Thyroid gland (tissue), 4 donors: ENCODE measurements at regions of chr15 and their contacts with region 1.

Region 1: DNA sequence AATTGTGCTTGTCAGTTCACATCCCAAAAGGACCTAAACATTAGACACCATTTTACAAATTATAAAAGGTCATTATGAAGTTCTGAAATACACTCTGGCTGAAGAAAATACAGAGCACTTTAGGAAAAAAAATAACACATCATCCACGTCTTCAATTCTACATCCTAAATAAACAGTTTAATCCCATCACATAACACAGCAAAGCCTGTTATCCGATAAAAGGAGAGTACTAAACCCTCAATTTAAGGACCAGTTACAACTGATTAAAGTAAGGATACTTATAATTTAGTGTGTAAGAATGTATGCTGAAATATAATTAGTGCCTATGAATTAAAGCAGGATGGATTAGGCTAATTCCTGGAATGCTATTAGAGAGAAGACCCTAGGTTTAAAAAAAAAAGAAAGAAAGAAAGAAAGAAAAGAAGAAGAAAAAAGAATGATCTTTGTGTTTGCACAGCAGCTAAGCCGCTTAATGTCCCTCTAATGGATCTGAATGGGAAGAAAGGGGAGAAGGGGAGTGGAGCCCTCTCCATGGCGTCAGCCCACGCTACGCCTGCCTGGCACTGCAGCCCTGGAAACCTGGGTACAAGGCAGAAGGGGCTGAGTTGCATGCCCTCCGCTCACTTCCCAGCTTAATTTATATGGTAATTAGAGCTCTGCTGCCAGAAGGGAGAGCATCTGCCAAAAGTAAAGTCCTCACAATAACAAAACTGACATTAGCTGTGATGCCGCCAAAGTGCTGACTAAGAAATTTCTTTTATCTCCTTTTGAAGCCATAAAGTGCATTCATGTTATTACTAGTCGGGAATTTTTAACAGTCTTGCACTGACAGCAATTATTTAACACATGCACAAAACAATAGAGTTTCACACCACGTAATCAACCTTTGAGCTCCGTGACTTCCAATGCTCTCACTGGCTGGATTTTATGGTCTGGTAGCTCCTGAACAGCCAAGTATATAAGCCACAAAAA is 90.0 kb downstream of the FSIP1 start:
- DNase-seq: no peak
- H3K4me3 ChIP-seq: no peak overlapping the region
- H3K27ac ChIP-seq: no peak overlapping the region
- H3K4me1 ChIP-seq: peaks cover 0 to 5% of the 10 kb centered on the region in 2 donors
- H3K27me3 ChIP-seq: no peaks in the 10 kb centered on the region
- CTCF ChIP-seq: no peak
- POLR2A ChIP-seq: no peak

Region 2: DNA sequence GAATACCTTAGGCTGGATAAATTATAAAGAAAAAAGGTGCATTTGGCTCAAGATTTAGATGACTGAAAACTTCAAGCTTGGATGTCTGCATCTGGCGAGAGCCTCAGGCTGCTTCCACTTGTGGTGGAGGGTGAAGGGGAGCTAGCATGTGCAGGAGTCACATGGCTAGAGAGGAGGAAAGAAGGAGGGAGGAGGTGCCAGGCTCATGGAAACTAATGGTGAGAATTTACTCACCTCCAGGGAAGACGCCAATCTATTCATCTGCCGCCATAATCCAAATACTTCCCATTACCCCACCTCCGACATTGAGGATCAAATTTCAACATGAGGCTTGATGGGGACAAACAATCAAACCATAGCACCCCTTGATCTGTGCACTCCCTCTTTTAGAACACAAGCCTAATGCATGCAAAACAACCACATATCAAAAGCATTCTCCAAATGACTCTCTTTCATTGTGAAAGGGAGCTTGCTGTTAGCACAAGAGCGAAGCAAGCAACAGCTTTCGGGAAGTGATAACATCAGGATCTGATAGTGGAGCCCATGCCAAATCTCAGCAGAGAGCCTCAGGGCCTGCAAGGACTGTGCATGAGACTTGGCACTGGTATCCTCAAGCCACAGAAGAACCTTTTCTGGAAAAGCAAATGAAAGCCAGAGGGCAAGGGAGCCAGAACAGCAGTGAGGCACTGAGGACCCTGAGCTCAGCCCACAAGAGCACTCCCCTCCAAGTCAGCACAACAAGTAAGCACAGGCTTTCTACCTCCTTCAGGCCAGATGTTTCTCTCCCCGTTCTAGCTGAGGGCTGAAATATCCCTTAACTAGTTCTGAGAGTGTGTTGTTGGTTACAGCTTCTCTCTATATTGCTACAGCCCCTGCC is 161.9 kb before region 1 on chr15:
- intact Hi-C with region 1: no loop called
- DNase-seq: no peak
- H3K4me3 ChIP-seq: no peak overlapping the region
- H3K27ac ChIP-seq: no peak overlapping the region
- H3K4me1 ChIP-seq: no peaks in the 10 kb centered on the region
- H3K27me3 ChIP-seq: no peaks in the 10 kb centered on the region
- CTCF ChIP-seq: no peak
- POLR2A ChIP-seq: no peak

Region 3: GRCh38 chr15:39756806-39757522 is 64.3 kb after region 1 on chr15:
- intact Hi-C with region 1: loop called (anchors 5 kb)
- DNase-seq: peak in 1 of 2 donors; percentile 16
- H3K4me3 ChIP-seq: no peak overlapping the region
- H3K27ac ChIP-seq: no peak overlapping the region
- H3K4me1 ChIP-seq: no peaks in the 10 kb centered on the region
- H3K27me3 ChIP-seq: no peaks in the 10 kb centered on the region
- CTCF ChIP-seq: peak; percentile 28 to 81 (median 60)
- POLR2A ChIP-seq: no peak